Dorsolateral prefrontal cortex (tissue), 120 donors: ENCODE measurements at regions of chr12 and their contacts with region 1.

Region 1: GRCh38 chr12:96314723-96315122 is 85.5 kb downstream of the CDK17 start:
- DNase-seq: no peak
- H3K4me3 ChIP-seq: no peak overlapping the region
- H3K27ac ChIP-seq: peak overlapping the region in 40 of 59 donors; percentile 0 to 77 (median 43)
- H3K27me3 ChIP-seq: no peaks in the 10 kb centered on the region
- CTCF ChIP-seq: no peak

Region 2: GRCh38 chr12:96359328-96359727 is 44.6 kb after region 1 on chr12:
- intact Hi-C with region 1: loop called in 1 of 2 experiments (anchors 5 kb)
- DNase-seq: no peak
- H3K4me3 ChIP-seq: no peak overlapping the region
- H3K27ac ChIP-seq: peak overlapping the region in 1 of 59 donors; percentile 3
- H3K27me3 ChIP-seq: no peaks in the 10 kb centered on the region
- CTCF ChIP-seq: no peak

Region 3: GRCh38 chr12:96383991-96384390 is 69.3 kb after region 1 on chr12:
- intact Hi-C with region 1: no loop called
- DNase-seq: no peak
- H3K4me3 ChIP-seq: no peak overlapping the region
- H3K27ac ChIP-seq: peak overlapping the region in 1 of 59 donors; percentile 3
- H3K27me3 ChIP-seq: no peaks in the 10 kb centered on the region
- CTCF ChIP-seq: no peak